ENCODE measurements at regions of chr7 and their contacts with region 1.

Region 1: DNA sequence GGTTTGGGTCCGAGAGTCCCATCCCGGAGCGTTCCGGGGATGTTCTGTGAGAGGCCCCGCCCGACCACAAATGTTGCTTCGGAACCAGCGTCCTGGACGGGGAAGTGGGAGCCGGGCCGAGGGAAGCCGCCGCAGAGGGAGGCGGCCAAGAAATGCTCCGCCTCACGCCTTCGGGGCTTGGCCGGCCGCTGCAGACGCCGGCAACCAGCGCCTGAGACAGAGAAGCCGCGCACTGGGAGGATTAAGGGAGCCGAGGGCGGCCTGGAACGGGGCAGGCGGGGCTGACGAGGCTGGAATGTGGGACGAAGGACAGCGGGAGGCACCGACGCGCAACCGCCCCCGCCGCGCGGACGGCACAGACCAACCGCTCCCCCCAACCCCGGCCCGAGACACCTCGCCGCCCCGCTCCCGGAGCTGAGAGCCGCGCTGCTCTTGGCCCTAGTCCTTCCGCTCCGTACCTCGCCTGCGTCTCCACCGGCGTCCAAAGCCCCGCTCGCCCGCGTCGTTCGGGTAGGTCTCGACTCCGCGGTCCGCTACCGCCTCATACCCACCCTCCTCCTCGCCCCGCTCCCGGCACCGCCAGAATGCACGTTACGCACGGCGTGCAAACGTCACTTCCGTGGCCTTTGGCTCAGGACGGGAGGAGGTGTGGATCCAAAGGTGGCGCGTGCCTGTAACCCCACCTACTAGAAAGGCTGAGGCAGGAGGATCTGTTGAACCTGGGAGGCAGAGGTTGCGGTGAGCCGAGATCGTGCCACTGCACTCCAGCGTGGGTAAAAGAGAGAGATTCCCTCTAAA is 36.7 kb upstream of the KCTD7 start:
- DNase-seq: peak; percentile 89 to 99 (median 94)

Region 2: GRCh38 chr7:66265566-66265965 is 326.4 kb before region 1 on chr7:
- intact Hi-C with region 1: no loop called
- DNase-seq: no peak

Region 3: GRCh38 chr7:66628361-66629140 is 36.6 kb after region 1 on chr7 and contains the start of gene KCTD7:
- intact Hi-C with region 1: loop called (anchors 2 kb)
- DNase-seq: peak; percentile 96 to 100 (median 99)

Region 4: GRCh38 chr7:66779669-66780409 is 187.8 kb after region 1 on chr7:
- intact Hi-C with region 1: no loop called
- DNase-seq: no peak

Measured in posterior cingulate gyrus (tissue), 11 donors.